ENCODE measurements at regions of chr6 and their contacts with region 1.

Region 1: GRCh38 chr6:12150812-12151432 is 138.8 kb downstream of the HIVEP1 start:
- DNase-seq: no peak
- H3K4me3 ChIP-seq: no peak overlapping the region
- H3K27ac ChIP-seq: no peak overlapping the region
- H3K4me1 ChIP-seq: no peaks in the 10 kb centered on the region
- H3K27me3 ChIP-seq: no peaks in the 10 kb centered on the region
- CTCF ChIP-seq: peak in 2 of 3 donors; percentile 29 to 38
- POLR2A ChIP-seq: no peak

Region 2: GRCh38 chr6:12605888-12606345 is 455.0 kb after region 1 on chr6:
- intact Hi-C with region 1: loop called (anchors 10 kb)
- DNase-seq: peak in 1 of 2 donors; percentile 40
- H3K4me3 ChIP-seq: no peak overlapping the region
- H3K27ac ChIP-seq: no peak overlapping the region
- H3K4me1 ChIP-seq: no peaks in the 10 kb centered on the region
- H3K27me3 ChIP-seq: no peaks in the 10 kb centered on the region
- CTCF ChIP-seq: peak; percentile 48 to 79 (median 69)
- POLR2A ChIP-seq: no peak

Measured in breast epithelium (tissue), 4 donors.